ENCODE measurements at regions of chr17 and their contacts with region 1.

Region 1: GRCh38 chr17:29807520-29808351 is 122.3 kb downstream of the SSH2 start:
- DNase-seq: peak in 7 of 10 donors; percentile 32 to 91 (median 72)

Region 2: DNA sequence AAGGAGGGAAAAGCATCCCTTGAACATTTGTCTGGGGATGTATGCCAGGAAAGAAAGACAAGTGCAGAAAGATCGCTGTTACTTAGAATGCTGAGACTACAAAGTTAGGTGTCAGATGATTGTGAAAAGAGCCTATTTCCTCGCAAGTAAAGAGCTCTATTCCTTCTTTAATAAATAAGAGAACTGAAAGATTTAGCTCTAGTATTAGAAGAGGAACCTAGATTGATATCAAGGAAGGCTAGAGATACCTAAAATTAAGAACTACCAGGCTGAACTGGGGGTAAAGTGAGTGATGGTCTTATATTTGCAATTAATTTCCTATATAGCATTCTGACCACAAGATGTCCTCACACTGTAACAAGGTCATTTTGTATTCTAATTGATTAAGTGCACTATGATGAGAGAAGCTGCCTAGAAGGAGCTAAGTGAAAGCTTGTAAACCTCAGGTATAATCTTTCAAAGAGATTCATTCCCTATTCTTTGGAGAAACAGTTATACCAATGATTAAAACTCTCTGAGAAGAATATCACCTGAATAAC is 60.0 kb after region 1 on chr17:
- intact Hi-C with region 1: loop called (anchors 5 kb)
- DNase-seq: no peak

Region 3: DNA sequence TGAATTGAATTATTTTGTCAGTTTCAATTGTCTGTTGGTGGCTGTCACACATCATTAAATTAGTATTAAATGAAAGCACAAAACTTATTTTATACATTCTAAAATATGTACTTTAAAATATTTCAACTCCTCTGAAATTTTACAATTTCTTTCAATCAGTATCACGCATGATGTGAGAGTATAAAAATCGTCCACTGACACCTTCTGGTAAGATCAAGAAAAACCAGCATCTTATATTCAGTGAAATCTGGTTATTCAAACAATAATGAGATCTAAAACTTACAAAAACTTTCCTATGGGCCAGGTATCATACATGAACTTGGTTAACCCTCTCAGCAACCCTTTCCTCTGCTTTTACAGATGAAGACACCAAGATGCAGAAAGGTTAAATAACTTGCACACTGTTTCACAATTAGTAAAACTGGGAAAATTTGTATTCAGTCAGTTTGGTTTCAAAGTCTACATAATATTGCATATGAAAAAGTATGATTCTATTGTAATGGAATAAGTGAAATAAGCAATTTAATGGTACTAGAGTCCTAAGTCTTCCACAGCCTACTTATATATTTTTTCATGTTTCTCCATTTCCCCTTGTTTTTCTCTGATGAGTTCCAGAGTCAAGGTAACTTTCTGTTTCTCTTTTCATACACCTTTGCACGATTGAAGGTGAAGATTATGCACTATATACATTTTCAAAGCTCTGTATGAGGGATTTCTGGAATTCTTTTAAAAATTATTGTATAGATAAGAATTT is 192.4 kb after region 1 on chr17:
- intact Hi-C with region 1: loop called (anchors 10 kb)
- DNase-seq: no peak

Region 4: GRCh38 chr17:30093463-30094147 is 285.9 kb after region 1 on chr17:
- intact Hi-C with region 1: loop called (anchors 5 kb)
- DNase-seq: peak in 4 of 10 donors; percentile 33 to 54 (median 38)

Measured in posterior cingulate gyrus (tissue), 11 donors.